Aorta (tissue), 5 donors: ENCODE measurements at regions of chr20 and their contacts with region 1.

Region 1: GRCh38 chr20:36050436-36051317 is 82.3 kb downstream of the CNBD2 start:
- DNase-seq: peak; percentile 95 to 96
- ATAC-seq: peak; percentile 99
- H3K4me3 ChIP-seq: peak overlapping the region; percentile 65 to 68
- H3K27ac ChIP-seq: peak overlapping the region; percentile 88 to 90
- H3K4me1 ChIP-seq: no peaks in the 10 kb centered on the region
- H3K27me3 ChIP-seq: no peaks in the 10 kb centered on the region

Region 2: GRCh38 chr20:35541783-35542588 is 508.7 kb before region 1 on chr20 and contains the start of gene ERGIC3:
- intact Hi-C with region 1: loop called in 1 of 2 experiments (anchors 5 kb)
- DNase-seq: peak; percentile 98 to 99
- ATAC-seq: peak; percentile 98
- H3K4me3 ChIP-seq: peak within 1 kb of the TSS; percentile 46 to 77
- H3K27ac ChIP-seq: no peak within 1 kb of the TSS
- H3K4me1 ChIP-seq: no peaks in the 10 kb centered on the region
- H3K27me3 ChIP-seq: no peaks in the 10 kb centered on the region
- total RNA-seq, gene ERGIC3: 140 to 166 TPM

Region 3: DNA sequence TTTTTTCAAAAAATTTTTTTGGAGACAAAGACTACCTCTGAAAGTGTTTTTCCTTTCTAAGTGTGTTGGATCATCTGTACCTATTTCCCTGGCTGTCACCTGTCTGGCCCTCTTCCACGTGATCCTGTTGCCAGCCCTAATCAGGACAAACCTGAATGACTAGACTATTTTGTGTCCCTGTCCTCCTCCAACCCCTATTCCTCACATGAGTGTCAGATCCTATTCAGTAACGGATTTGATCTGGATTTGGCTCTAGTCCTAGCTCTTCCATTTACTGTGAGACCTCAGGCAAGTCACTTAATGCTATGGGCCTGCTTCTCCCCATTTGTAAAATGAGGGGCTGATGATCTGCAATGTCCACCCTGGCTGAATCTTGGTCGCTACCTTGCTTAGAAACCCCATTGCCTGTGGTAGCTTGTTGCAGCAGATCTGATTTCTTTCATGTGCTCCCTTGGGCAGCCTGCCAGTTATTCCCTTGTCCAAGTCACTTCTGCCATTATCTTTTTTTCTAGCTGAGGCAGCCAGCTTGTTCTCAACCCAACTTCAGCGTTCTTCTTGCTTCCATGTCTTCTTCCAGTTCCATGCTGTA is 274.1 kb before region 1 on chr20:
- intact Hi-C with region 1: no loop called
- DNase-seq: peak in 1 of 2 donors; percentile 66
- ATAC-seq: no peak
- H3K4me3 ChIP-seq: no peak overlapping the region
- H3K27ac ChIP-seq: no peak overlapping the region
- H3K4me1 ChIP-seq: no peaks in the 10 kb centered on the region
- H3K27me3 ChIP-seq: no peaks in the 10 kb centered on the region

Region 4: DNA sequence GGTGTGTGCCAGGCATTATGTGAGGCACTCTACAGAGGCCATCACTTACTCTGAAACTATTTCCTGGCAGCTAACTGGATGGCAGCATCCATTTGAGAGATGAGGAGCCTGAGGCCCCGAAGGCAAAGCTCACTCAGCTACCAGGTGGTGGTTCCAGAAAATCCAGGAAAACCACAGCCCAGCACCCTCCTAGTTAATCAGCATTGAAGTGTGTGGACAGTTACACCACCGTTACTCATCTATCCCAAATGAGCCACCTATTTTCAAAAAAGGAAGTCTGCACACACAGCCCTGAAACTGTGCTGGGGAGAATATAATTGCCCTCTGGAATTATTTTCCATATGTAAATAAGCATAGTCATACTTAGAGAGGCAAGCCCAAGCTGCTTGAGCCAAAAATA is 14.9 kb before region 1 on chr20:
- intact Hi-C with region 1: no loop called
- DNase-seq: no peak
- ATAC-seq: no peak
- H3K4me3 ChIP-seq: no peak overlapping the region
- H3K27ac ChIP-seq: no peak overlapping the region
- H3K4me1 ChIP-seq: no peaks in the 10 kb centered on the region
- H3K27me3 ChIP-seq: no peaks in the 10 kb centered on the region

Region 5: DNA sequence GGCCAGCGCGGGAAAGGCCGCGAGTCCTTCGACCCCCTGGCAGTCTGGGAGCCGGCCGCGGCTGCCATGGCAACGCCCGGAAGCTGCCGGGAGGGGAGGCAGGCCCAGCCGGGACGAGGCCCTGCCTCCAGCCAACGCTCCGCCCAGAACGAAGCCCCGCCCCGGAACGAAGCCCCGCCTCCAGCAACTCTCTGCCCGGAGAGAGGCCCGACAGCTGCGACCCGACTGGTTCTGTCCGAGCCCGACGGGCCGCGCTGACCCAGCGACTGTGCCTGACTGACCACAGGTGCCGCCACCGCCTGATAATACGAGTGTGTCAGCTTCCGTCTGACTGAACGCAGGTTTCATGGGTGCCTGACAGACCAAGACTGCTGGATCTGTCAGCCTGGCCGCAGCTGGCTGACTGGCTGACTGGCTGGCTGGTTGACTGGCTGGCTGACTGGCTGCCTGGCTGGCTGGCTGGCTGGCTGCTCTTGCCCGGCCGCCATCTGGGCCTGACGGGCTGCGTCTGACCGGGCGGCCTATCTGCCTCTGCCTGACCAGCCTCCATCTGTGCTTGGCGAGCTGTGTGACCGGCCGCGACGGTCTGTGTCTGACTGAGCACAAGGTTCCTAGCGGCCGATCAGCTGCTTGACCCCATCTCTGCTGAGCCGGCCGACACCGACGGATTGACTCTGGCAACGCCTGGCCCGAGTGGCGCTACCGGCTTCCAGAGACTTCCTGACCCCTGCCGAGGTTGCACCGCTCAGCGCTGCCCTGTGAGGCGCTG is 14.2 kb after region 1 on chr20:
- intact Hi-C with region 1: loop called in 1 of 2 experiments (anchors 1 kb)
- DNase-seq: peak; percentile 97 to 99
- ATAC-seq: peak; percentile 98
- H3K4me3 ChIP-seq: peak overlapping the region; percentile 12 to 51
- H3K27ac ChIP-seq: peak overlapping the region in 1 of 2 donors; percentile 11
- H3K4me1 ChIP-seq: no peaks in the 10 kb centered on the region
- H3K27me3 ChIP-seq: no peaks in the 10 kb centered on the region

Region 6: GRCh38 chr20:36093025-36093803 is 42.5 kb after region 1 on chr20:
- intact Hi-C with region 1: loop called in 1 of 2 experiments (anchors 5 kb)
- DNase-seq: peak; percentile 82 to 84
- ATAC-seq: peak; percentile 37
- H3K4me3 ChIP-seq: peak overlapping the region; percentile 61 to 71
- H3K27ac ChIP-seq: no peak overlapping the region
- H3K4me1 ChIP-seq: peaks cover 0 to 5% of the 10 kb centered on the region in 2 donors
- H3K27me3 ChIP-seq: no peaks in the 10 kb centered on the region

Region 7: GRCh38 chr20:36132802-36133211 is 82.1 kb after region 1 on chr20:
- intact Hi-C with region 1: loop called in 1 of 2 experiments (anchors 5 kb)
- DNase-seq: no peak
- ATAC-seq: no peak
- H3K4me3 ChIP-seq: no peak overlapping the region
- H3K27ac ChIP-seq: no peak overlapping the region
- H3K4me1 ChIP-seq: no peaks in the 10 kb centered on the region
- H3K27me3 ChIP-seq: no peaks in the 10 kb centered on the region

Region 8: DNA sequence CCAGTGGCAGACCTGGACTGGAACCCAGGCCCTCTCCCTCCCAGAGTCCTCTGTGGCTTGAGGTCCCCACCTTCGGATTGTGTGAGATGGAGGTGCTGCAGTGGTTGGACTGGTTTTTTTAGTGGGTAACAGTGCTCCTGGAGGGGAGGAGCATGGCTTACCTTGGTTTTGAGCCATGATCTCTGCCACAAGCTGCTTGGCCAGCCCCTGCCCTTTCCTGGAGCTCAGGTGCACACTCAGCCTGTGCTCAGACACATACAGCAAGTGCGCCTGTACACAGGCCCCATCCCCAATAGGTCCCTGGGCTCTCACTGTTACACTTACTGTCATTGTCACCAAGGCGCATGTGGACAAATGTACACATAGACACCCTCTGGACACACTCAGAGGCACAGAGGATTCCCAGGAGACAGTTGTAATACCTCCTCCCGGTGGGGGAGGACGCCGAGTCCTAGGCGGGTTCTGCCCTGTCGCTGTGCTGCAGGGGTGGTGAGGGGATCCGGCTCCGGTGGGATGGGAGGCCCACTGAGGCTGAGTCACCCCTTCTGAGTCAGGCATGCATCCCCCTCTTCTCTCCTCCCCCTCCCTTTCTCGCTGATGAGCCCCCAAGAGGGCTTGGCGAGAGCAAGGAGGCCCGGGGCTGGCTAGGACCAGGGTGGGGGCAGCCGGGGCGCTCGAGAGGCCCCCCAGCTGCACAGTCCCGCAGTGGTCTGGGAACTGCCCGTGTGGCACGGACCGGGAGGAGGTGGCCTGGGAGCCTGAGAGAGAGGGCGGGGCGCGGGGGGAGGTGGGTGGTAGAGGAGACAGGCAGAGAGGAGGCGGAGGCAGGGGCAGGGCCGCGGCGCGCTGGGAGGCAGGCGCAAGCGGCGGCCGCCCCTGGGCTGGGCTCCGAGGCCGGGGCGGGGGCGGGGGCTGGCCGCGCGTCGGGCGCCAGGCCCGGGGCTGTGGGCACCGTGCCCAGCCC is 103.3 kb after region 1 on chr20:
- intact Hi-C with region 1: no loop called
- DNase-seq: peak; percentile 92 to 96
- ATAC-seq: peak; percentile 87
- H3K4me3 ChIP-seq: peak overlapping the region; percentile 53 to 54
- H3K27ac ChIP-seq: peak overlapping the region in 1 of 2 donors; percentile 32
- H3K4me1 ChIP-seq: peaks cover 0 to 3% of the 10 kb centered on the region in 2 donors
- H3K27me3 ChIP-seq: no peaks in the 10 kb centered on the region